ENCODE measurements at regions of chr16 and their contacts with region 1.

Region 1: DNA sequence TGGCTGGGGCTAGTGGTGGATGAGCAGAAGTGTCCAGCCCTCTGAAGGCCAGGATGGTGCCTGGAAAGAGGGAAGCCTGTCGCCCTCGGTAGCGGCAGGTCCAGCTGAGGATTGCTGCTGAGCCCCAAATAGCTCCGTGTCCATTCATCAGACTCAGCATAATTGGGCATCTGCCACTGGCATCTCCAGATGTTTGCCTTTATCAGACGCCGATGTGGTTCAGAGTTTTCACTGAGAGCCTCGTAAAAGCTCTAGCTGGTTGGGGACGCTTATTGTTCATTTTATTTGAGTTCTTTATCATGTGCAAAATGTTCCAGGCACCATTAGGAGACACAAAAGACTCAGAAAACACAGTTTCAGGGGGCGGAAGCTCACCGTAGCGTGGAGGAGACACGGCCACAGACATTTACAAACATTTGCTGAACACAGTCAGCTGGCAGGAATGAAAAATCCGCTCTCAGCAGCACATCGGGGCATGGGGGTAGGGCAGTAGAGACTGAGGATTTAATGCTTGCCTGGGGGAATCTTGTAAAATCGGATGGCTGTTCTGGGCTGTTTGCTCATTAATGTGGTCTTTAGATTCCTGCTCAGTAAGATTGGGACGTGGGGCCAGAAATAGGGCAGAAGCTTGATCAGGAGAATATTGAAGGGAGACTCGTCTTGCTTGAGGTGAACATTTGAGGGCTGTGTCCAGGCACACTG is 41.7 kb downstream of the SMPD3 start:
- DNase-seq: no peak
- ATAC-seq: no peak
- H3K4me3 Mint-ChIP-seq: no peak overlapping the region
- H3K27ac Mint-ChIP-seq: no peak overlapping the region
- H3K4me1 Mint-ChIP-seq: peaks cover 5% of the 10 kb centered on the region
- H3K27me3 Mint-ChIP-seq: peaks cover 2% of the 10 kb centered on the region

Region 2: GRCh38 chr16:68396481-68396880 is 10.1 kb before region 1 on chr16:
- CTCF ChIA-PET with region 1: interaction called, 15 read pairs
- POLR2A ChIA-PET with region 1: no interaction called
- intact Hi-C with region 1: no loop called
- DNase-seq: peak; percentile 69
- ATAC-seq: peak; percentile 60
- H3K4me3 Mint-ChIP-seq: no peak overlapping the region
- H3K27ac Mint-ChIP-seq: no peak overlapping the region
- H3K4me1 Mint-ChIP-seq: peaks cover 16% of the 10 kb centered on the region
- H3K27me3 Mint-ChIP-seq: no peaks in the 10 kb centered on the region

Region 3: DNA sequence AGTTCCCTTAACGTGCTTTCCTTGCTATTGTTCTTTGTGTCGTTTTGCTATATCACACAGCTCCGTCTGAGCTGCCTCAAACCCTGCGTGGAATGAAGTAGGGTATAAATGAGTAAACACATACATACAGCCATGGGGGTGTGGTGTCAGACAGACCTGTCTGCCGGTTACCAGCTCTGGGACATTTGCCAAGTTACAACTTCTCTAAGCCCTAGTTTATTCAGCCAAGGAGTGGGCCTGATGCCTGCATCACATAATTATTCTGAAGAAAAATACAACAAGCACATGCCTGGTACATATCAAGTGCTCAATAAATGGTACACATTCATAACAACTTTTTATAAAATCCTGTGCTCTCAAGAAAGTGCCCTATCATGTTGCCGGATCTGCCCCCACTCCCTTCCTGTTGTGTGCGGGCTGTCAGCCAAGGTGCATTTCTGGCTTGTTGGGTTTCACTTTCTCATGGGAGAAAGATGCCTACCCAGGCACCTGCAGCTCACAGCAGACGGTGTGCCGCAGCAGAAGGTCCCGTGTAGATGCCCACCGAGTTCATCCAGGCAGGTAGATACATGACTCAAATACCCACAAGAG is 11.2 kb after region 1 on chr16:
- CTCF ChIA-PET with region 1: interaction called, 20 read pairs
- POLR2A ChIA-PET with region 1: interaction called, 3 read pairs
- intact Hi-C with region 1: no loop called
- DNase-seq: peak; percentile 85
- ATAC-seq: peak; percentile 91
- H3K4me3 Mint-ChIP-seq: peak overlapping the region; percentile 67
- H3K27ac Mint-ChIP-seq: peak overlapping the region; percentile 88
- H3K4me1 Mint-ChIP-seq: peaks cover 59% of the 10 kb centered on the region
- H3K27me3 Mint-ChIP-seq: no peaks in the 10 kb centered on the region

Region 4: GRCh38 chr16:68460067-68460466 is 53.5 kb after region 1 on chr16:
- CTCF ChIA-PET with region 1: no interaction called
- POLR2A ChIA-PET with region 1: no interaction called
- intact Hi-C with region 1: no loop called
- DNase-seq: no peak
- ATAC-seq: peak; percentile 87
- H3K4me3 Mint-ChIP-seq: no peak overlapping the region
- H3K27ac Mint-ChIP-seq: no peak overlapping the region
- H3K4me1 Mint-ChIP-seq: peaks cover 1% of the 10 kb centered on the region
- H3K27me3 Mint-ChIP-seq: no peaks in the 10 kb centered on the region